ENCODE measurements at regions of chr16 and their contacts with region 1.

Region 1: DNA sequence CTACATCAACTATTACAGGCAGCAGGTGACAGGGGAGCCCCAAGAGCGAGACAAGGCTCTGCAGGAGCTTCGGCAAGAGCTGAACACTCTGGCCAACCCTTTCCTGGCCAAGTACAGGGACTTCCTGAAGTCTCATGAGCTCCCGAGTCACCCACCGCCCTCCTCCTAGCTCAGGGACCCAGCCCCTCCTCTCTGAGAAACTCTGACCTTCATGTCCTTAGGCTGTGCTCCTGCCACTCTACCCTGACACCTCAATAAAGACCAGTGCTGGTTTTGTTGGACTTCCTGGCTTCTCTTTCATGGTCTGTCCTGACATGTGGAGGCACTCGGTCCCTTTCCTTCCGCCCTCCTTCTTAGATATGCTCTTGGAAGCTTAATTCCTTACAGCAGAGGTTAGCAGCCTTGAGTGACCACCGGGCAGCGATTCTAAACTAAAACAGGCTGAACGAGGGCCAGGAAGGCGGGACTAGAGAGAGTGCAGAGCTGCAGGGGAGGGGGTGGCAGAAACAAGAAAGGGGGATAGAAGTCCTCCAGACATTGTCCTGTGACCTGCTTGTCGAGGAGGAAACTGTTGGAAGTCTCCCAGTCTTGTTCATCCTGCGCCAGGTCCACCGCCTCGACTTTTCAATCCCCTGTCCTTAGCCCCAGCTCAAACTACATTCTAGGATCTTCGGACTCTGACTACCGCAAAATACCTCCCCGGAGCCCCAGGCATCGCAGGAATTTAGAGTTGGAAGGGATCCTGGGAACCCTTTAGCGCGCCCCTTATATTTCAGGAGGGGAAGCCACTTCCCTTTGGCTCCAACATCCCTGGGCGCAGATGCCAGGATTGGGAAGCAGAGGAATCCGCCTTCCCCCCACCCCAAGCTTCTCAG is 1.1 kb downstream of the AHSP start:
- DNase-seq: no peak
- H3K4me3 ChIP-seq: peak overlapping the region; percentile 45
- H3K27ac ChIP-seq: no peak overlapping the region
- H3K27me3 ChIP-seq: peaks cover 30% of the 10 kb centered on the region
- CTCF ChIP-seq: no peak

Region 2: DNA sequence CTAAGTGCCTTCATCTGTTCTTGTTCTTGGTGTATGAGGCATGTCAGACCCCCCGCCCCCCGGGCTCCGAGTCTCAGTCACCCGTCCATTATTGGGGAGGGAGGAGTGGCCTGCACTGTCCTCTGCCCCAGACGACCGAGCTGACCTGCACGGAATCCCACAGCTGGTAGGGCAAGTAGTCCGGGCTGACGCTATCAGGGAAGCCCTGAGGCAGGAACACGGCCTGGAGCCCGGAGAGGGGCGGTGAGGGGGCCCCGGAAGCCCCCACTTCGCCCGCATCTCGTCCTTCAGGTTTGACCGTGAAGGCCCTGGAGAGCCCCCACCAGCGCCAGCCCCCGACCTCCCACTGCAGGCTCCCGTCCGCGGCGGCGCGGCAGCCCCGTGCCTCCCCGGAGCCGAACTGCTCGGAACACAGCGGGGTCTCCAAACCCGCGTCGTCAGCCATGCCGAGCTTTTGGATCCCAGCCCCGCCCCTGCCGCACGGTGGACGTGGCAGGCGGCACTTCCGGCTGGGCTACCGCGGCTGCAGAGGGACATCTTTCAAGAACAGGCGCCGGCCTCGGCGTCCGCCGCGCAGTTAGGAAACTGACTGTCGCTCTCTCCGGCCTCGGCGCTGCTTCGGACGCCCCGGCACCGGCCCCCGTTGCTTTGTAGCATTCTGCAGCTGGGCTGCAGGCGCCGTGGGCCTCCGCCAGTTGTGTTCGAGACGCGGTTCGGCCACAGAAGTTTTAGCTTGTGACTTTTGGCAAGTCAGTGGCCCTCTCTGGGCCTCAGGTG is 20.6 kb before region 1 on chr16 and contains the start of gene RUSF1:
- CTCF ChIA-PET with region 1: no interaction called
- POLR2A ChIA-PET with region 1: interaction called, 10 read pairs
- DNase-seq: peak; percentile 65
- H3K4me3 ChIP-seq: peak within 1 kb of the TSS; percentile 93
- H3K27ac ChIP-seq: peak within 1 kb of the TSS; percentile 94
- H3K27me3 ChIP-seq: no peaks in the 10 kb centered on the region
- CTCF ChIP-seq: no peak
- polyA plus RNA-seq, gene RUSF1: 32.2 and 38.6 TPM in 2 replicates

Measured in AG04450 (cell line).